Activated CD4-positive, alpha-beta T cell treated with anti-CD3 and anti-CD28 coated beads, Interleukin-2, amount 10 ng/mL, durations not matched to agents 7 days and 5 days (primary cell): ENCODE measurements at regions of chr11 and their contacts with region 1.

Region 1: DNA sequence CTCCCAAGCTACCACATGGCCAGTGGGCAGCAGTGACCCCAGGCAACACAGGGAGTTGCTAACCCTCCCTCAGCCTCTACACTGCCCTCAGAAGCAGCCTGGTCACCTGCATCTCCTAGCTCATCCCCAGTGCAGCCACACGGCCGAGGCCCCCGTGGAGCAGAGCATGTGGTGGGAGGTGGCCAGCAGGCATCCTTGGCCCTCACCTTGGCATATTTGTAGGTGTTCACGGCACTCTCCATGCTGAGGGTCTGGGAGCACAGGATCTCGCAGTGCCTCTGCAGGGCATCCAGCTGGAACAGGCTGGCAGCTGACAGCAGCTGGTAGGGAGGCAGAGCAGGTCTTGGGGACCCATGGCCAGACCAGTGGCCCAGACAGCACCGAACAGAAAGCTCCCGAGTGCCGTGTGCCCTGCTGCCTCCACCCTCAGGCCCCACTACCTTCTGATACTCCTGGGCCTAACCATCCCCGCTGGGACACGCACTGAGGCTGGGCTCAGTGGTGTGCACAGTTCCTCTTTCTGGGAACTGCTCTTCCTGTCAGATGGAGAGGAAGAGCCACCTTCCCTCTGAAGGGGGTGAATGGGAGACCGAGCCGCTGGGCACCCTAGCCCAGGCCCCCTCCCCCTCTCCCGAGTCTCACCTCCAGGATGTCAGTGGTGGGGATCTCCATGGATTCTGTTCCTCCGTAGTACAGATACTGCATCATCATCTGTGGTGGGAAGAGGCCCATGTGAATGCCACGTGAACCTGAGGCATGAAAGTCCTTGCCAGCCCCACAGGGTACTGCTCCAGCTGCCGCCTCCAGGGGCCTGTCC is 48.8 kb downstream of the NAT10 start:
- DNase-seq: no peak
- H3K4me3 Mint-ChIP-seq: no peak overlapping the region
- H3K27ac Mint-ChIP-seq: no peak overlapping the region
- H3K4me1 Mint-ChIP-seq: peaks cover 15% of the 10 kb centered on the region
- H3K27me3 Mint-ChIP-seq: no peaks in the 10 kb centered on the region

Region 2: GRCh38 chr11:34143048-34143447 is 11.2 kb before region 1 on chr11:
- CTCF ChIA-PET with region 1: interaction called, 17 read pairs
- POLR2A ChIA-PET with region 1: no interaction called
- DNase-seq: no peak
- H3K4me3 Mint-ChIP-seq: no peak overlapping the region
- H3K27ac Mint-ChIP-seq: no peak overlapping the region
- H3K4me1 Mint-ChIP-seq: no peaks in the 10 kb centered on the region
- H3K27me3 Mint-ChIP-seq: no peaks in the 10 kb centered on the region